CD8-positive, alpha-beta T cell (primary cell): ENCODE measurements at regions of chr1 and their contacts with region 1.

Region 1: GRCh38 chr1:108643492-108644335 is 17.2 kb downstream of the HENMT1 start:
- DNase-seq: peak in 6 of 9 experiments; percentile 27 to 87 (median 58)
- ATAC-seq: peak; percentile 15
- H3K4me3 ChIP-seq: no peak overlapping the region
- H3K4me3 Mint-ChIP-seq: peak overlapping the region; percentile 10
- H3K27ac ChIP-seq: peak overlapping the region; percentile 77 to 92
- H3K27ac Mint-ChIP-seq: peak overlapping the region; percentile 100
- H3K4me1 ChIP-seq: peaks cover 69% of the 10 kb centered on the region
- H3K4me1 Mint-ChIP-seq: peaks cover 77% of the 10 kb centered on the region
- H3K27me3 ChIP-seq: no peaks in the 10 kb centered on the region
- H3K27me3 Mint-ChIP-seq: no peaks in the 10 kb centered on the region
- CTCF ChIP-seq: peak; percentile 69

Region 2: GRCh38 chr1:108199781-108200570 is 443.7 kb before region 1 on chr1 and contains the start of gene SLC25A24:
- CTCF ChIA-PET with region 1: interaction called, 3 read pairs
- POLR2A ChIA-PET with region 1: interaction called, 5 read pairs
- intact Hi-C with region 1: loop called in 1 of 2 experiments (anchors 5 kb)
- DNase-seq: peak; percentile 34 to 85 (median 72)
- ATAC-seq: peak; percentile 94
- H3K4me3 ChIP-seq: peak within 1 kb of the TSS; percentile 75 to 98
- H3K4me3 Mint-ChIP-seq: peak within 1 kb of the TSS; percentile 88
- H3K27ac ChIP-seq: peak within 1 kb of the TSS; percentile 70 to 72
- H3K27ac Mint-ChIP-seq: peak within 1 kb of the TSS; percentile 87
- H3K4me1 ChIP-seq: peaks cover 12% of the 10 kb centered on the region
- H3K4me1 Mint-ChIP-seq: peaks cover 31% of the 10 kb centered on the region
- H3K27me3 ChIP-seq: no peaks in the 10 kb centered on the region
- H3K27me3 Mint-ChIP-seq: no peaks in the 10 kb centered on the region
- CTCF ChIP-seq: no peak
- total RNA-seq, gene SLC25A24: 3.3 to 4.3 TPM

Region 3: GRCh38 chr1:108559215-108560186 is 84.2 kb before region 1 on chr1 and contains the start of gene EEIG2:
- CTCF ChIA-PET with region 1: interaction called, 128 read pairs
- POLR2A ChIA-PET with region 1: interaction called, 33 read pairs
- intact Hi-C with region 1: loop called (anchors 1 kb)
- DNase-seq: peak; percentile 86 to 95 (median 89)
- ATAC-seq: peak; percentile 92
- H3K4me3 ChIP-seq: peak within 1 kb of the TSS; percentile 56 to 72
- H3K4me3 Mint-ChIP-seq: peak within 1 kb of the TSS; percentile 94
- H3K27ac ChIP-seq: peak within 1 kb of the TSS; percentile 41 to 69
- H3K27ac Mint-ChIP-seq: peak within 1 kb of the TSS; percentile 93
- H3K4me1 ChIP-seq: peaks cover 27% of the 10 kb centered on the region
- H3K4me1 Mint-ChIP-seq: peaks cover 45% of the 10 kb centered on the region
- H3K27me3 ChIP-seq: no peaks in the 10 kb centered on the region
- H3K27me3 Mint-ChIP-seq: no peaks in the 10 kb centered on the region
- CTCF ChIP-seq: peak; percentile 69
- total RNA-seq, gene EEIG2: 11.0 to 11.5 TPM

Region 4: GRCh38 chr1:108590957-108591356 is 52.8 kb before region 1 on chr1:
- CTCF ChIA-PET with region 1: interaction called, 3 read pairs
- POLR2A ChIA-PET with region 1: no interaction called
- intact Hi-C with region 1: loop called in 1 of 2 experiments (anchors 10 kb)
- DNase-seq: peak in 3 of 9 experiments; percentile 28 to 90 (median 84)
- ATAC-seq: peak; percentile 82
- H3K4me3 ChIP-seq: no peak overlapping the region
- H3K4me3 Mint-ChIP-seq: no peak overlapping the region
- H3K27ac ChIP-seq: peak overlapping the region; percentile 16 to 83
- H3K27ac Mint-ChIP-seq: no peak overlapping the region
- H3K4me1 ChIP-seq: peaks cover 19% of the 10 kb centered on the region
- H3K4me1 Mint-ChIP-seq: peaks cover 43% of the 10 kb centered on the region
- H3K27me3 ChIP-seq: no peaks in the 10 kb centered on the region
- H3K27me3 Mint-ChIP-seq: no peaks in the 10 kb centered on the region
- CTCF ChIP-seq: no peak

Region 5: GRCh38 chr1:108670131-108670773 is 26.5 kb after region 1 on chr1:
- CTCF ChIA-PET with region 1: interaction called, 11 read pairs
- POLR2A ChIA-PET with region 1: interaction called, 4 read pairs
- intact Hi-C with region 1: no loop called
- DNase-seq: no peak
- ATAC-seq: no peak
- H3K4me3 ChIP-seq: no peak overlapping the region
- H3K4me3 Mint-ChIP-seq: no peak overlapping the region
- H3K27ac ChIP-seq: no peak overlapping the region
- H3K27ac Mint-ChIP-seq: no peak overlapping the region
- H3K4me1 ChIP-seq: peaks cover 5% of the 10 kb centered on the region
- H3K4me1 Mint-ChIP-seq: peaks cover 13% of the 10 kb centered on the region
- H3K27me3 ChIP-seq: no peaks in the 10 kb centered on the region
- H3K27me3 Mint-ChIP-seq: peaks cover 2% of the 10 kb centered on the region
- CTCF ChIP-seq: no peak

Region 6: GRCh38 chr1:108718834-108719655 is 75.3 kb after region 1 on chr1:
- CTCF ChIA-PET with region 1: no interaction called
- POLR2A ChIA-PET with region 1: no interaction called
- intact Hi-C with region 1: no loop called
- DNase-seq: no peak
- ATAC-seq: no peak
- H3K4me3 ChIP-seq: no peak overlapping the region
- H3K4me3 Mint-ChIP-seq: no peak overlapping the region
- H3K27ac ChIP-seq: no peak overlapping the region
- H3K27ac Mint-ChIP-seq: no peak overlapping the region
- H3K4me1 ChIP-seq: no peaks in the 10 kb centered on the region
- H3K4me1 Mint-ChIP-seq: no peaks in the 10 kb centered on the region
- H3K27me3 ChIP-seq: no peaks in the 10 kb centered on the region
- H3K27me3 Mint-ChIP-seq: peaks cover 7% of the 10 kb centered on the region
- CTCF ChIP-seq: no peak

Region 7: GRCh38 chr1:108877348-108878159 is 233.8 kb after region 1 on chr1:
- CTCF ChIA-PET with region 1: no interaction called
- POLR2A ChIA-PET with region 1: no interaction called
- intact Hi-C with region 1: loop called in 1 of 2 experiments (anchors 10 kb)
- DNase-seq: peak in 2 of 9 experiments; percentile 14 to 19
- ATAC-seq: no peak
- H3K4me3 ChIP-seq: peak overlapping the region; percentile 69 to 80
- H3K4me3 Mint-ChIP-seq: peak overlapping the region; percentile 95
- H3K27ac ChIP-seq: peak overlapping the region; percentile 18 to 24
- H3K27ac Mint-ChIP-seq: peak overlapping the region; percentile 46
- H3K4me1 ChIP-seq: peaks cover 6% of the 10 kb centered on the region
- H3K4me1 Mint-ChIP-seq: peaks cover 12% of the 10 kb centered on the region
- H3K27me3 ChIP-seq: peaks cover 0 to under 1% of the 10 kb centered on the region in 2 experiments
- H3K27me3 Mint-ChIP-seq: peaks cover 4% of the 10 kb centered on the region
- CTCF ChIP-seq: no peak